ENCODE measurements at regions of chr12 and their contacts with region 1.

Region 1: GRCh38 chr12:51980051-51980808 is 26.5 kb upstream of the TAMALIN start:
- DNase-seq: no peak
- H3K4me3 ChIP-seq: no peak overlapping the region
- H3K27ac ChIP-seq: no peak overlapping the region
- H3K4me1 ChIP-seq: peaks cover 0 to 16% (median 0%) of the 10 kb centered on the region in 3 donors
- H3K27me3 ChIP-seq: no peaks in the 10 kb centered on the region
- CTCF ChIP-seq: peak; percentile 88 to 97 (median 96)
- POLR2A ChIP-seq: no peak

Region 2: GRCh38 chr12:51891843-51892242 is 88.4 kb before region 1 on chr12:
- intact Hi-C with region 1: loop called (anchors 10 kb)
- DNase-seq: no peak
- H3K4me3 ChIP-seq: no peak overlapping the region
- H3K27ac ChIP-seq: no peak overlapping the region
- H3K4me1 ChIP-seq: peaks cover 0 to 31% (median 0%) of the 10 kb centered on the region in 3 donors
- H3K27me3 ChIP-seq: peaks cover 0 to 24% (median 0%) of the 10 kb centered on the region in 4 donors
- CTCF ChIP-seq: peak in 4 of 6 experiments; percentile 23 to 43 (median 28)
- POLR2A ChIP-seq: no peak

Region 3: DNA sequence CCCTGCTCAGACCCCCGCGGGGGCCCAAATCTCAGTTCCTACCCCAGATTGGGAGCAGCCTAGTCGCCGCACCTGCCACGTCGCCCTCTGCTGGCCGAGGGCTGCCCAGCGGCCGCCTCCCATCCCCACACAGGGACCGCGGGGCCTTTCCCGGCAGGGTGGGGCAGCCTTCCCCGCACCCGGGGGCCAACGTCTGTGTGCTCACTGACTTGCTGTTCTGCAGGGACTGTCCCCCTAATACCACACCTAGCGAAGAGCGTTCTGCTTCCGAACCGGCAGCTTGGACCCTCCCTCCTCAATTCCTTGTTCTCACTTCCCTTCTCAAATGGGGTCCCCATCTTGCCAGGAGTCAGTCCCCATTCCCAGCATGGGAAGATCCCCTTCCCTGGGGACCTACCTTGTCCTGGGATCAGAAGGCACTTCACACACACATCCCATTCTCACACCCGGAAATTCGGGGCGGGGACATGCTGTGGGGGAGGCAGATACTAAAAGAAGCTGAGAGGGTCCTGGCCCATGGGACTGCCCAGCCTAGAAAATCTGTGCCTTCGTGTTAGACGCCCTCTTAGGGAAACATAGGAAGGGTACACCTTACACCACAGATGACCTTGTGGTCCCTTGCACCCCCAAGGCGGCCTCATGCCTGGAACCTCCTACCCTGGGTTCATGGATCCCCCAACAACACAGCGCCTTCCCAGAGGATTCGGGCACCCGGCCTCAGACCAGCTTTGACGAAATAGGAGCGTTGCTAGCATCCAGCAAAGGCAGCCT is 56.5 kb before region 1 on chr12:
- intact Hi-C with region 1: loop called (anchors 2 kb)
- DNase-seq: no peak
- H3K4me3 ChIP-seq: peak overlapping the region in 1 of 4 donors; percentile 44
- H3K27ac ChIP-seq: peak overlapping the region; percentile 33 to 83 (median 77)
- H3K4me1 ChIP-seq: peaks cover 10 to 29% (median 18%) of the 10 kb centered on the region in 3 donors
- H3K27me3 ChIP-seq: no peaks in the 10 kb centered on the region
- CTCF ChIP-seq: peak; percentile 47 to 82 (median 70)
- POLR2A ChIP-seq: no peak